Activated naive CD4-positive, alpha-beta T cell treated with anti-CD3 and anti-CD28 coated beads for 36 hours (primary cell): ENCODE measurements at regions of chr4 and their contacts with region 1.

Region 1: DNA sequence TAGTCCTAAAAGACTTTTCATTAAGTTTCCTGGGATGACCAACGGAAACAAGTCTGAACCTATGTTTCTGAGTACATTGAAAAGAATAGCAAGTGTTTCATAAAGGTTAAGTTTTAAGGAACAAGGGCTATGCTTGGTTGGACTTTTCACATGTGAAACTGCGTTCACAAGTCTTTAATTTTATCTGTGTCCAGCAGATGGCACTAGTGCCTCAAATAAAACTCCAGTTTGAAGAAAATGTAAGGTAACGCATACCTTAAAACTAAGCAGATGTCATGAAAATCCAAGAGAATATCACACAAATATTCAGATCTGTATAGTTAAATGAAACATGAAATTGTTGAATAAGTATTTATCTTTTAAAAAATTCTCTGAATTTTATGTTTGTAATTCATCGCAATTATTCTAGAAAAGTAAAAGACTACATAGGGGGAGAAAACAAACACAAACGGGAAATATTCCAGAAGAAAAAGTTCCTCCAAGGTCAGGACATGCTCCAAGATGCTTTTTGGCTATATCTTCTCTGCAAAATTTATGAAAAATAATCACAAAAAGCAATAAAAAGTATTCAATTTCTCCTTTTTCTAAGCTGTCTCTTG is 89.6 kb upstream of the MAD2L1 start:
- DNase-seq: peak; percentile 32
- H3K4me3 Mint-ChIP-seq: no peak overlapping the region
- H3K27ac Mint-ChIP-seq: no peak overlapping the region
- H3K4me1 Mint-ChIP-seq: no peaks in the 10 kb centered on the region
- H3K27me3 Mint-ChIP-seq: no peaks in the 10 kb centered on the region

Region 2: GRCh38 chr4:120809518-120809917 is 653.3 kb after region 1 on chr4:
- CTCF ChIA-PET with region 1: no interaction called
- intact Hi-C with region 1: loop called (anchors 1 kb)
- DNase-seq: no peak
- H3K4me3 Mint-ChIP-seq: no peak overlapping the region
- H3K27ac Mint-ChIP-seq: no peak overlapping the region
- H3K4me1 Mint-ChIP-seq: no peaks in the 10 kb centered on the region
- H3K27me3 Mint-ChIP-seq: no peaks in the 10 kb centered on the region

Region 3: GRCh38 chr4:120977435-120977997 is 821.3 kb after region 1 on chr4:
- CTCF ChIA-PET with region 1: no interaction called
- intact Hi-C with region 1: loop called (anchors 5 kb)
- DNase-seq: peak; percentile 26
- H3K4me3 Mint-ChIP-seq: no peak overlapping the region
- H3K27ac Mint-ChIP-seq: no peak overlapping the region
- H3K4me1 Mint-ChIP-seq: no peaks in the 10 kb centered on the region
- H3K27me3 Mint-ChIP-seq: no peaks in the 10 kb centered on the region

Region 4: GRCh38 chr4:121096629-121097028 is 940.4 kb after region 1 on chr4:
- CTCF ChIA-PET with region 1: interaction called, 3 read pairs
- intact Hi-C with region 1: loop called (anchors 1 kb)
- DNase-seq: no peak
- H3K4me3 Mint-ChIP-seq: no peak overlapping the region
- H3K27ac Mint-ChIP-seq: no peak overlapping the region
- H3K4me1 Mint-ChIP-seq: no peaks in the 10 kb centered on the region
- H3K27me3 Mint-ChIP-seq: no peaks in the 10 kb centered on the region

Region 5: DNA sequence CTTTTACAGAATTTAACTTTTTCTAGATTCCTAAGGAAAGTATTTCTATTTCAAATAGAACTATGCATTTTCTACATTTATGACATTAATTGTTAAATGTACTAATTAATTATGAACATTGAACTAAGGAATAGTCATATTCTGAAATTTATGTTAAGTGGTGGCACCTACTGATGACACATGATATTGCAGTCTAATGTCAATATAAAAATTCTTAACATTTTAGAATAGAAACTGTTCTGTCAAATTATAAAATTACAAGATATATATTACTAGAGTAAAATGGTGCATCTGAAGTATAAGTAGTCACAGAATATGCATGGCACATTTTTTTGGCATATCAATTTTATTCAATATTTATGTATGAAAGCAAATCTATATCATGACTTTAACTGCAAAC is 956.3 kb after region 1 on chr4:
- CTCF ChIA-PET with region 1: no interaction called
- intact Hi-C with region 1: loop called (anchors 5 kb)
- DNase-seq: no peak
- H3K4me3 Mint-ChIP-seq: no peak overlapping the region
- H3K27ac Mint-ChIP-seq: no peak overlapping the region
- H3K4me1 Mint-ChIP-seq: peaks cover 22% of the 10 kb centered on the region
- H3K27me3 Mint-ChIP-seq: no peaks in the 10 kb centered on the region